Dendritic cell treated with granulocyte-macrophage colony-stimulating factor and Interleukin-4, amounts not matched to agents 40 ng/mL and 50 ng/mL, for 4 days (primary cell): ENCODE measurements at regions of chr6 and their contacts with region 1.

Region 1: DNA sequence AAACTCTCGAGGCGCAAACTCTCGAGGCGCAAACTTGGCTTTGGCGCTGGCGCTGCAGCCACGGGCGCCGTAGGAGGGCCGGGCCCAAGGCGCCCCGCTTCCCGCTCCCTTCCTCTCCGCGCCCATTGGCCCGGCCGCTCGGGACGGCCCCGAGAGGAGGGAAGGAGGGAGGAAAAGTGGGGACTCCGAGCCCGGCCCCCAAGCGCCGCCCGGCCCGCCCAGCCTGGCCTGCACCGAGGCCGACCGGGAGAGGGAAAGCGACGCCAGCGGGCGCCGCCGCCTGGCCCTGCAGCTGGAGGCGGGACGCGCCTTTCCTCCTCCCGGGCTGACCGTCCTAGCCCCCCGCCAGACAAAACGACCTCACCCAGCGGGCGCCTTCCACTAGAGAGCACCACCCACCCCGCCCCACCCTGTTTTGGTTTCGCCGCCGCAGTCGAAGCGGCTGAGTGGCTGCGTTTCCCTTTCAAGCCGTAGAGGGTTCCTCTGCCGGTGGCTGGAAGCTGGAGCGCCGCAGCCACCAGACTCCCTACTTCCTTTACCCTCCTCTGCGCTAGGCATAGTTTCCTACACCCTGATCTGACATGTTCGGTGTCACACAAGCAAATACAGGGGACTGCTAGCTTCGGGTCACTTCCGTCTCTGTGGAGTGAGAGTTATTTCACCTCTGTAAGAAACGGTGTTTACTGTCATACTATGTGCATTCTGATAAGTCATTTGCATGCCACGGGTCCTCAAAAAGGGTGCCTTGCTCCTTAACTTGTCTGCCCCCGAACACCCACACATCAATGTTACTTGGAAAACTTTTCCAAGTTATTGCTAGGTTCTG is at the start of gene MBOAT1:
- H3K4me3 Mint-ChIP-seq: peak within 1 kb of the TSS; percentile 81
- H3K27ac Mint-ChIP-seq: peak within 1 kb of the TSS; percentile 97
- H3K4me1 Mint-ChIP-seq: peaks cover 35% of the 10 kb centered on the region
- H3K27me3 Mint-ChIP-seq: no peaks in the 10 kb centered on the region

Region 2: DNA sequence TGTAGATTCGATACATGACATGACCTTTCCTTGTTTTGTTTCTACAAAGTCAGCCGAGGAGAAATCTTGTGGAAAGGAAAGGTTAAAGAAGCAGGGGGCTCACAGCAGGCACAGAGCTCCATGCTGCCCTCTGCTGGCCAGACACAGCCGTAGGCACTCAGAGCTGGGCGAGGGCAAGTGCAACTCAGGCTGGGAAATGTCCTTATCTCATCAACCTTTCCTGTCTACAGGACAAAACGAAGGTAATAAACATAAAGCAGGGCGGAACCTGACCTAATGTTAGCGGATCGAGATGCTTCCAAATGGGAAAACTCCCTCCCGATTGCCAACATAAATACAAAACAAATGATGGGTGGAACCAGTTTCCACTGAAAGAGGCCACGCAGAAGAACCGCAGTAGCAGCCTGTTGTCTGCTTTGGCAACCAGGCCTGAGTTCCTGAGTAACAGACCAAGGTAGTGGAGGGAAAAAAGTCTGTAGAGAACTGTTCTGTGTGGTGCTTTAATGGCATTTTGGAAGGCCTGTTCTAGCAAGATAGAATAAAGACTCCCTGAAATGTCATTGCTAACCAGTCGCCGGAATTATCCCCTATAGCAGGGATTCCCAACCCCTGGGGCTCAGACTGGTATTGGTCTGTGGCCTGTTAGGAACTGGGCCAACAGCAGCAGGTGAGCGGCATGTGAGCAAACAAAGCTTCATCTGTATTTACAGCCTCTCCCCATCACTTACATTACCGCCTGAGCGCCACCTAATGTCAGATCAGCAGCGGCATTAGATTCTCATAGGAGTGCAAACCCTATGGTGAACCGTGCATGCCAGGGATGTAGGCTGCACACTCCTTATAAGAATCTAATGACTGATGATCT is 85.6 kb before region 1 on chr6:
- intact Hi-C with region 1: loop called (anchors 5 kb)
- H3K4me3 Mint-ChIP-seq: no peak overlapping the region
- H3K27ac Mint-ChIP-seq: no peak overlapping the region
- H3K4me1 Mint-ChIP-seq: no peaks in the 10 kb centered on the region
- H3K27me3 Mint-ChIP-seq: no peaks in the 10 kb centered on the region

Region 3: DNA sequence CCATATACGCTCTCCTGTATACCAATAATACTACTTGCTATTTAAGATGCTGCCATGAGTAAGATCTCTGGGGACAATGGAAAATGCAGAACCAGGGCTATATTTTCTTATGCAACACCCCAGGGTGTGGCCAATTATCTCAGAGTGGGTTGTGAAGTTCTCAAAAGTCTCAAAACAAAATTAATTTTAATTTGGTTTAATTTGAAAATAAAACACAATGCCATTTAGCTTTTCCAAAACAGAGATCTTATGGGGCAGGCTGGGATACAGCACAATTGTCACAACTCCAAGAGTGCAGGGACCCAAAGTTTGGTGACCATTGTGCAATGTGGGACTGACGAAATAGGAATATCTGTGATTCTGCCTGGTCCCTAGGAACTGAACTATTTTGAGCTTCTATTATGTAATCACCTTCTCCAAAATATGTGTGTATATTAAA is 43.5 kb before region 1 on chr6:
- intact Hi-C with region 1: loop called (anchors 2 kb)
- H3K4me3 Mint-ChIP-seq: no peak overlapping the region
- H3K27ac Mint-ChIP-seq: peak overlapping the region; percentile 69
- H3K4me1 Mint-ChIP-seq: peaks cover 66% of the 10 kb centered on the region
- H3K27me3 Mint-ChIP-seq: no peaks in the 10 kb centered on the region

Region 4: DNA sequence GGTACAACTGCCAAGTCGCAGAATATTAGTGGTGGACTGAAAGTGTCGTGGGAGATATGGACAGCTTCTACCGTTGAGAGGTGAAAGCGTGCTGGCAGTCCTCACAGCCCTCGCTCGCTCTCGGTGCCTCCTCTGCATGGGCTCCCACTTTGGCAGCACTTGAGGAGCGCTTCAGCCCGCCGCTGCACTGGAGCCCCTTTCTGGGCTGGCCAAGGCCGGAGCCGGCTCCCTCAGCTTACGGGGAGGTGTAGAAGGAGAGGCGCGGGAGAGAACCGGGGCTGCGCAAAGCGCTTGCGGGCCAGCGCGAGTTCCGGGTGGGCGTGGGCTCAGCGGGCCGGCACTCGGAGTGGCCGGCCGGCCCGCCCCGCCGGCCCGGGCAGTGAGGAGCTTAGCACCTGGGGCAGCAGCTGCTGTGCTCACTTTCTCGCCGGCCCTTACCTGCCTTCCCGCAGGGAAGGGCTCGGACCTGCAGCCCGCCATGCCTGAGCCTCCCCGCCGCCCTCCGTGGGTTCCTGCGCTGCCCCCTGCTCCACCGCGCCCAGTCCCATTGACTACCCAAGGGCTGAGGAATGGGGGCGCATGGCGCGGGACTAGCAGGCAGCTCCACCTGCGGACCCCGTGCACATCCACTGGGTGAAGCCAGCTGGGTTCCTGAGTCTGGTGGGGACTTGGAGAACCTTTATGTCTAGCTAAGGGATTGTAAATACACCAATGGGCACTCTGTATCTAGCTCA is 46.9 kb after region 1 on chr6:
- intact Hi-C with region 1: loop called (anchors 5 kb)
- H3K4me3 Mint-ChIP-seq: no peak overlapping the region
- H3K27ac Mint-ChIP-seq: peak overlapping the region; percentile 45
- H3K4me1 Mint-ChIP-seq: peaks cover 11% of the 10 kb centered on the region
- H3K27me3 Mint-ChIP-seq: no peaks in the 10 kb centered on the region

Region 5: DNA sequence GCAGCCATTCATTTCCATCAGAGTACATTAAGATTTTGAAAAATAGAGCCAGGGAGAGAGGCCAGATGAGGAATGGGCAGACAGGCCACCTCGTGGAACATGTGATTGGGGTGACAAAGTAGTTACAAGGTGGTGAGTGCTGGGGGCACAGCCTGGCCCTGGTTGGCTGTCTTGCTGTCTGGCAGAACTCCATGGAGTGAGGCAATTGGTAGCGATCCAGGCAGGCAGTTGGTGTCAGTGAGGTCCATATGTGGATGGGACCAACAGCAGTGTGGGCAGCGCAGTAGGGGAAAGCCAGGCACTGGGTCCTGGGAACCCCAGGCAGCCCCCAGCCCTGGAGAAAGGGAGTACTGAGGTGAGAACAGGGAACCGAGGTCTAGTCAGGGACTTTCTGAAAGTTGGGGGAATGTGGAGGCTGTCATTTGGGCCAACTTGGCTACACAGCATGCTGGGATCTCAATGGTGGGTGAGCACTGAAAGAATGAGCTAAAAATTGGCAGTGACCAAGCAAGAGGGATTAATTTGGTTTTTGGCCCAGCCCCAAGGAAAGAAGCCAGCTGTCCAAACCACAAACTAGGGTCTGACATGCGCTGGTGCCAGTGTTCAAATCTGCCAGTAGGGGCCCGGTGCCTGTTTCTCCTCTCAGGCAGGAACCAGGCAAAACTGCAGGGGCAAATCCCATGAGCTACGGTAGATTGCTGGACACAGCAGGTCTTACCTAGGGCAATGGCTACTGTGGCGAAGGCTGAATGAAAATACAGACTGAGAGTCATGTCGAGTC is 127.7 kb after region 1 on chr6:
- intact Hi-C with region 1: no loop called
- H3K4me3 Mint-ChIP-seq: no peak overlapping the region
- H3K27ac Mint-ChIP-seq: no peak overlapping the region
- H3K4me1 Mint-ChIP-seq: peaks cover 6% of the 10 kb centered on the region
- H3K27me3 Mint-ChIP-seq: no peaks in the 10 kb centered on the region

Region 6: DNA sequence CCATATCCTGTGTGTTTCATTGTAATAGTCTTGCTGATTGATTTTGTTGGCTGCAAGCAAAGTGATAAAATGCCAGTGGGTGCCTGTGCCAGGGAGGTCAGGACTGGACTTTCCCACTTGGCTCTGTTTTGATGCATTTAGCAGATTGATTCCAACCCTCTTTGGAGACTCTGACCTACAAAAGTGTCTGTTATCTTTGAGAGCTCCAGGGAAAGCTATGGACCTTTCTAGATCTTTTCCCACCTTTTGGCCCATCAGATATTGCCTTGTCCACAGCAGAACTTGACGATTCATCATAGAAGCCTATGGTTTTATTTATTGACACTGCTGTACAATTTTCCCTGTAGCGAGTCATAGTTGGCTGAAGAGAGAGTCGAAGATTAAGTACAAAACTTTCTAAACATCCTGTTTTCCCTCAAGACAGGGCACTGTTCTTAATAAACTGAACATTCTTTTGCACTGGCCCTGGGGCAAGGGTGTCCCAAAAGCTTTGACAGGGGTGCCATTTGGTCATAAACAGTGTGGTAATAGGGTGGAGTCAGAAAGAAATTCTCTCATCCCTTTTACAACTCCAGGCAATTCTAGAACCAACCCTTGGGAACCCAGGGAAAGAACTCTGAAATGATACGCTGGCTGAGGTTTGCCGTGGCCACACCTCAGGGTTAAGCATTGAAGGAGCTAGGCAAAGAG is 242.8 kb after region 1 on chr6:
- intact Hi-C with region 1: no loop called
- H3K4me3 Mint-ChIP-seq: no peak overlapping the region
- H3K27ac Mint-ChIP-seq: no peak overlapping the region
- H3K4me1 Mint-ChIP-seq: peaks cover 71% of the 10 kb centered on the region
- H3K27me3 Mint-ChIP-seq: no peaks in the 10 kb centered on the region

Region 7: GRCh38 chr6:20534295-20535262 is 322.0 kb after region 1 on chr6 and contains the start of gene CDKAL1:
- intact Hi-C with region 1: loop called (anchors 10 kb)
- H3K4me3 Mint-ChIP-seq: peak within 1 kb of the TSS; percentile 92
- H3K27ac Mint-ChIP-seq: peak within 1 kb of the TSS; percentile 94
- H3K4me1 Mint-ChIP-seq: peaks cover 36% of the 10 kb centered on the region
- H3K27me3 Mint-ChIP-seq: no peaks in the 10 kb centered on the region